Aorta (tissue), 5 donors: ENCODE measurements at regions of chr2 and their contacts with region 1.

Region 1: GRCh38 chr2:167212014-167212648 is 323.9 kb downstream of the XIRP2 start:
- DNase-seq: no peak
- ATAC-seq: no peak
- H3K4me3 ChIP-seq: no peak overlapping the region
- H3K27ac ChIP-seq: no peak overlapping the region
- H3K4me1 ChIP-seq: no peaks in the 10 kb centered on the region
- H3K27me3 ChIP-seq: no peaks in the 10 kb centered on the region

Region 2: GRCh38 chr2:166539340-166540162 is 672.6 kb before region 1 on chr2:
- intact Hi-C with region 1: loop called (anchors 5 to 10 kb)
- DNase-seq: no peak
- ATAC-seq: peak; percentile 82
- H3K4me3 ChIP-seq: no peak overlapping the region
- H3K27ac ChIP-seq: no peak overlapping the region
- H3K4me1 ChIP-seq: no peaks in the 10 kb centered on the region
- H3K27me3 ChIP-seq: no peaks in the 10 kb centered on the region

Region 3: DNA sequence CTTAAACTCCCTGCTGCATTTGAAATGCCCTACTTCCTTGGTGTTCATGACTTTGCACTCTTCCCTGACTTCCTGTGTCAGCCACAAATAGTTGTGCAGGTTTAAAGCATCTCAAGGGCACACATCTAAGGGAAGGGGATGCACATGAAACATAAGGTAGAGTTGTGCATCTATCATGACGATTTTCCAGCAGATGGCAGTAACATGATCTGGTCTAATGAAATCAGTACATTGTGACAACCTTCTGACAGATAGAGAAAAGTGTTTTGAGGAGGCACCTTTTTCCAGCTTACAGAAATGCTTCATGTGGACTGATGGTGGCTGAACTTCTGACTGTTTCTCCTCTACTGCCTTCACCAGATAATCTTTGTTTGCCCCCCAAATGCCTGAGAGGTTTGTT is 85.0 kb before region 1 on chr2:
- intact Hi-C with region 1: loop called in 1 of 2 experiments (anchors 5 kb)
- DNase-seq: no peak
- ATAC-seq: no peak
- H3K4me3 ChIP-seq: no peak overlapping the region
- H3K27ac ChIP-seq: no peak overlapping the region
- H3K4me1 ChIP-seq: no peaks in the 10 kb centered on the region
- H3K27me3 ChIP-seq: no peaks in the 10 kb centered on the region

Region 4: DNA sequence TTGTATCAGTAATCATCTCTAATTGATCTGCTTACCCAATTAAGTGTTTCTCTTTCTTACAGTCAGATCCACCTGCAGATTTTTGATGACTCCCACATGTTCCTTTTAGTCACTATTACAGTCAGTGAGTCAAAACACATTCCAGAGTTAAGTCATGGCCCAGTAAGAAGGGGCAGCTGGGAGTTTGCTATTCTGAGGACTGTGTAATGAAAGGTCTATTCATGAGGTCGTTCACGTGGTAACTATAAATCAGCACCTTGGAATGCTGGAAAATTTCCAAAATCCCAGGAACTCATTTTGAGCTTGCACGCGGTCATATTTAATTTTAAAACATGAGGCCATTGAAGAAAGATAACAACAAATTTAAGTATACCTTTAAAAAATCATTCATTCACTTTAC is 71.4 kb before region 1 on chr2:
- intact Hi-C with region 1: loop called in 1 of 2 experiments (anchors 5 kb)
- DNase-seq: no peak
- ATAC-seq: peak; percentile 74
- H3K4me3 ChIP-seq: no peak overlapping the region
- H3K27ac ChIP-seq: no peak overlapping the region
- H3K4me1 ChIP-seq: peaks cover 0 to 2% of the 10 kb centered on the region in 2 donors
- H3K27me3 ChIP-seq: no peaks in the 10 kb centered on the region

Region 5: GRCh38 chr2:167240671-167241070 is 28.5 kb after region 1 on chr2:
- intact Hi-C with region 1: no loop called
- DNase-seq: no peak
- ATAC-seq: no peak
- H3K4me3 ChIP-seq: no peak overlapping the region
- H3K27ac ChIP-seq: no peak overlapping the region
- H3K4me1 ChIP-seq: no peaks in the 10 kb centered on the region
- H3K27me3 ChIP-seq: no peaks in the 10 kb centered on the region